Stomach (tissue), 19 donors: ENCODE measurements at regions of chr5 and their contacts with region 1.

Region 1: GRCh38 chr5:173753307-173754168 is 134.6 kb upstream of the CPEB4 start:
- DNase-seq: peak in 1 of 2 donors; percentile 53
- H3K4me3 ChIP-seq: no peak overlapping the region
- H3K27ac ChIP-seq: no peak overlapping the region
- H3K4me1 ChIP-seq: no peaks in the 10 kb centered on the region
- H3K27me3 ChIP-seq: no peaks in the 10 kb centered on the region
- CTCF ChIP-seq: no peak
- EP300 ChIP-seq: no peak
- POLR2A ChIP-seq: no peak

Region 2: GRCh38 chr5:173629628-173630027 is 123.9 kb before region 1 on chr5:
- intact Hi-C with region 1: loop called (anchors 10 kb)
- DNase-seq: no peak
- H3K4me3 ChIP-seq: no peak overlapping the region
- H3K27ac ChIP-seq: no peak overlapping the region
- H3K4me1 ChIP-seq: no peaks in the 10 kb centered on the region
- H3K27me3 ChIP-seq: no peaks in the 10 kb centered on the region
- CTCF ChIP-seq: no peak
- EP300 ChIP-seq: no peak
- POLR2A ChIP-seq: no peak